Ascending aorta (tissue), 2 donors: ENCODE measurements at regions of chr19 and their contacts with region 1.

Region 1: GRCh38 chr19:17654993-17655392 is 33.2 kb downstream of the UNC13A start:
- DNase-seq: no peak
- H3K4me3 ChIP-seq: no peak overlapping the region
- H3K27ac ChIP-seq: no peak overlapping the region
- H3K4me1 ChIP-seq: peaks cover 3 to 13% of the 10 kb centered on the region in 2 donors
- H3K27me3 ChIP-seq: no peaks in the 10 kb centered on the region
- CTCF ChIP-seq: no peak

Region 2: DNA sequence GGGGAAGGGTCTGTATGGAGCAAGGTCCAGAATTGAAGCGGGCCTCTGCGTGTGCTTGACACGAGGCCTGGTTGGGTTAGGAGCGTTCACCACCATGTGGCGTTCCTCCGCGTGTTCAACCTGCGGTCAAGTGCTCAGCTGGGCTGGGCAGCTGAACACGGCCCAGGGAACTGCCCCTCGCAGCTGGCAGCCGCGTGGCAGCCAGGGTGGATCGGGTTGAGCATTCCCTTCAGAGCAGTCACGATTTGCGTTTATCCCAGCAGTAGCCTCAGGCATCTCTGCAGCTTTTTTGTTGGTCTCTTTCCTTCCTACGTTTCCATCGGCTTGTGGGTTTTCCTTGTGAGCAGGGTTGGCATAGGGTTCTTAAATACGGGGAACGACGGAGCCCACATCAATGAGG is 794.9 kb before region 1 on chr19:
- intact Hi-C with region 1: no loop called
- DNase-seq: no peak
- H3K4me3 ChIP-seq: no peak overlapping the region
- H3K27ac ChIP-seq: no peak overlapping the region
- H3K4me1 ChIP-seq: no peaks in the 10 kb centered on the region
- H3K27me3 ChIP-seq: no peaks in the 10 kb centered on the region
- CTCF ChIP-seq: no peak

Region 3: GRCh38 chr19:17680235-17680722 is 25.3 kb after region 1 on chr19:
- intact Hi-C with region 1: loop called (anchors 1 kb)
- DNase-seq: peak; percentile 72 to 95
- H3K4me3 ChIP-seq: peak overlapping the region; percentile 58 to 61
- H3K27ac ChIP-seq: peak overlapping the region; percentile 61 to 81
- H3K4me1 ChIP-seq: peaks cover 4 to 9% of the 10 kb centered on the region in 2 donors
- H3K27me3 ChIP-seq: peaks cover 3% of the 10 kb centered on the region
- CTCF ChIP-seq: peak in 1 of 3 experiments; percentile 8